Panc1 (cell line): ENCODE measurements at regions of chr7 and their contacts with region 1.

Region 1: DNA sequence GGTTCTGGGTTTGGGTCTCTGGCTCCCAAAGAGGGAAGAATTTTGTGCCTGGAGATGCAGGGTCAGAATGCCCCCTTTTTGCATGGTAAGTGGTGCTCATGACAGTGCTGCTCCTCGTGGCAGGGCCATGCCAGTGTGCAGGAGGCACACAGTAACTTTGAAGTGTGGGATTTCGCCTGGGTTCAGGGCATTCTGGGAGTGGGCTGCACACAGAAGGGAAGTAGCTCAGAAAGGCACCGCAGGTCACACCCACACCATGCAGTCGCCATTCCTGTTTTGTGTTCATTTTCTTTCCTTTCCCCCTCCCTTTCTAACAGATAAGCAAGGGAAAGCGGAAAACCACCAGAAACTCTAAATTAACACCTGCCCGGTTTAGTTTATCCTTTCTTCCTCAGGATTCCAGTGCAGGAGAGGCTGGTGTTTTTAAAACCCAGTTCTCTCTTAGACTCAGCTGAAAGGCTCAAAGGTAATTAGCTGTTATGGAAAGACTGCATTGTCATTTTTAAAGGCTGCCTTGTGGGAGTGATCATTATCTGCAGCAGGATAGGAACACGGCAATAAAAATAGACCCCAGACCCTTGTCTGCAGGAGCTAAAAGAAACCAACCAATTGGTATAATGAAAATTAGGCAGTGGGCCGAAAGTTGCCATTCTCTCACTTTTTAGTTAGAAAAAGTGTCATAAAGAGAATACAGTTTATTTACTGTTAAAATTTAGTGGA is 50.2 kb downstream of the EEPD1 start:
- DNase-seq: no peak
- ATAC-seq: no peak
- H3K4me3 ChIP-seq: no peak overlapping the region
- H3K27ac ChIP-seq: peak overlapping the region; percentile 9
- H3K4me1 ChIP-seq: peaks cover 67% of the 10 kb centered on the region
- H3K27me3 ChIP-seq: no peaks in the 10 kb centered on the region
- CTCF ChIP-seq: no peak

Region 2: GRCh38 chr7:36021367-36021766 is 181.9 kb before region 1 on chr7:
- CTCF ChIA-PET with region 1: interaction called, 11 read pairs
- POLR2A ChIA-PET with region 1: no interaction called
- in situ Hi-C with region 1: no loop called
- intact Hi-C with region 1: no loop called
- DNase-seq: no peak
- ATAC-seq: peak; percentile 56; the same call in 1 of the 2 replicates
- H3K4me3 ChIP-seq: no peak overlapping the region
- H3K27ac ChIP-seq: no peak overlapping the region
- H3K4me1 ChIP-seq: no peaks in the 10 kb centered on the region
- H3K27me3 ChIP-seq: no peaks in the 10 kb centered on the region
- CTCF ChIP-seq: peak; percentile 84

Region 3: GRCh38 chr7:36190447-36191291 is 12.6 kb before region 1 on chr7:
- CTCF ChIA-PET with region 1: no interaction called
- POLR2A ChIA-PET with region 1: no interaction called
- in situ Hi-C with region 1: no loop called
- intact Hi-C with region 1: no loop called
- DNase-seq: no peak
- ATAC-seq: no peak
- H3K4me3 ChIP-seq: no peak overlapping the region
- H3K27ac ChIP-seq: peak overlapping the region; percentile 36; the same call in 1 of the 2 replicates
- H3K4me1 ChIP-seq: peaks cover 46% of the 10 kb centered on the region
- H3K27me3 ChIP-seq: no peaks in the 10 kb centered on the region
- CTCF ChIP-seq: no peak